Common myeloid progenitor, CD34-positive (primary cell): ENCODE measurements at regions of chr17 and their contacts with region 1.

Region 1: GRCh38 chr17:47663912-47664625 is 14.3 kb downstream of the KPNB1 start:
- DNase-seq: peak; percentile 69 to 81 (median 73)
- H3K4me3 ChIP-seq: no peak overlapping the region
- H3K27ac ChIP-seq: no peak overlapping the region
- H3K4me1 ChIP-seq: peaks cover 7 to 20% (median 12%) of the 10 kb centered on the region in 4 experiments
- H3K27me3 ChIP-seq: no peaks in the 10 kb centered on the region

Region 2: DNA sequence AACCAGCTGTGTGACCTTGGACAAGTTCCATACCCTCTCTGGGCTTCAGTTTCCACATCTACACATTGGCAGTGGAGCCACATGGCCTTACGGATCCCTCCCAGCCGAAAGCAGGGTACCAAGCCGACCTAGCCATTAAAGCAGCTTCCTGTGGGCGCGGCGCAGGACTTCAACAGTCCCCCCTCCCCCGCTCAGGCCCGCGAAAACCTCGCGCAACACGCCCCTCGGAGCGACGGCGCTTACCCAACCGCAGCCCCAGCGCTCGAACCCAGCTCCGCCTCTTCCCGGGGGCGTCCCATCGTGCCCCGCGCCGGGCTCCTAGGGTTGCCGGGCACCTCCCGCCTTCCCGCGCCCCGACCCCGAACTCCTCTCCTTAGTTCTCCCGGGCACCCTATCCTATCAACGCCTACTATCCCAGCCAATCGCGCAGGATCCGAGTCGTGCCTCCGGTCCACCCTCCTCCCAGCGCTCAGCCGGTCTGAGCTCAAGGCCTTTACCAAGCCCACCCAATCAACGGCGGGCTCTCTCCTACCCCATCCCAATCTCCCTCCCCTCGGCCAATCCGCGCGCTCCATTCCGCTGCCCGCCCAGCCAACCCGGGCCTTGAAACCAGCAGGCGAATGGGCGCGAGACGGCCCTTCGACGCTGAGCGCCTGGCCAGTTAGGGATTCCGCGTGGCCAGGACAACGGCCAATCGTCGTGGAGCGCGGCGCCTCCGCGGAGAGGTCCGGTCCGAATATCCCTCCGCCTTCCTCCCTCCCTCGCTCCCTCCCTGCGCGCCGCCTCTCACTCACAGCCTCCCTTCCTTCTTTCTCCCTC is 14.7 kb before region 1 on chr17 and contains the start of gene KPNB1:
- CTCF ChIA-PET with region 1: interaction called, 56 read pairs
- POLR2A ChIA-PET with region 1: no interaction called
- DNase-seq: peak; percentile 100
- H3K4me3 ChIP-seq: peak within 1 kb of the TSS; percentile 66 to 91 (median 81)
- H3K27ac ChIP-seq: peak within 1 kb of the TSS; percentile 61 to 79
- H3K4me1 ChIP-seq: peaks cover 21 to 44% (median 36%) of the 10 kb centered on the region in 4 experiments
- H3K27me3 ChIP-seq: no peaks in the 10 kb centered on the region

Region 3: GRCh38 chr17:47675380-47676198 is 11.5 kb after region 1 on chr17:
- CTCF ChIA-PET with region 1: interaction called, 44 read pairs
- POLR2A ChIA-PET with region 1: no interaction called
- DNase-seq: no peak
- H3K4me3 ChIP-seq: no peak overlapping the region
- H3K27ac ChIP-seq: no peak overlapping the region
- H3K4me1 ChIP-seq: peaks cover 0 to 1% (median 0%) of the 10 kb centered on the region in 4 experiments
- H3K27me3 ChIP-seq: no peaks in the 10 kb centered on the region

Region 4: DNA sequence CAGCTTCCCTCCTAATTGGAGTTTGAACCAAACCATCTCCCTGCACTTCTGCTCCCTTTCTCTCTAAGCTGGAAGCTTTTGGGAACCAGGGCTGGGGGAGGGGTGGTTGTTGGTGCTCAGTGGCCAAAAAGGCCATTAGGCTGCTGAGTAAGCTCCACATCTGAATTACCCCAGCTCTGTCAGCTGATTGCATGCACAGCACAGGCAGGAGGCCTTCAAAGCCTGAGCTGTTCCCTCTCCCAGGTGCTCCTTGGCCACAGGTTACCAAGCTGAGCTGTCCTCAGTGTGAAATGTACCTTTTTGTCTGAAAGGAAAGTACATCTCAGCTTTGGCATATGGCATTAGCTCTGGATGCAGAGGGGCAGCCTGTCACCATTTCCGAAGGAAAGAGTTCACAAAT is 23.7 kb after region 1 on chr17:
- CTCF ChIA-PET with region 1: interaction called, 17 read pairs
- POLR2A ChIA-PET with region 1: no interaction called
- DNase-seq: no peak
- H3K4me3 ChIP-seq: no peak overlapping the region
- H3K27ac ChIP-seq: no peak overlapping the region
- H3K4me1 ChIP-seq: peaks cover 2 to 16% (median 7%) of the 10 kb centered on the region in 4 experiments
- H3K27me3 ChIP-seq: no peaks in the 10 kb centered on the region

Region 5: DNA sequence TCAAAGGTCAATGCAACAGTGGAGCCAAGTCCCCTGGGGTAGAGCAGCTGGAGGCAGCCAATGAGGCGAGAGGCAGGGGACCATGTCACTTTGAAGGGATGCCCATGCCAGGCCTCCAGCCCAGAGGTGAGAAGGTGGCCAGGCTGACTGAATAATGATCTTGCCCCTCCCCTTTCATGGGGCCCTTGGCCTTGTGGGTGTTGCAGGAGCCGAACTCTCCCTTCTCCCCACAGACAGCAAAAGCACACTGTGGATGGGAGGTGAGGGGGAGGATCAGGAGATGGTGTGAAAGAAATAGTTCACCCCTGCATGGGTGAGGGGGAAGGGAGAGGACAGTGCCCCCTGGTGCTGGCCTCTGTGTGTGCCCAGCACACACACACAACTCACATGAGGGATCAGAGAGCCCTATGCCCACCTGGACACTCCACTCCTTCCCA is 53.2 kb after region 1 on chr17:
- CTCF ChIA-PET with region 1: interaction called, 16 read pairs
- POLR2A ChIA-PET with region 1: no interaction called
- DNase-seq: peak in 1 of 3 donors; percentile 41
- H3K4me3 ChIP-seq: no peak overlapping the region
- H3K27ac ChIP-seq: no peak overlapping the region
- H3K4me1 ChIP-seq: peaks cover 10 to 71% (median 62%) of the 10 kb centered on the region in 4 experiments
- H3K27me3 ChIP-seq: peaks cover 0 to 13% (median 0%) of the 10 kb centered on the region in 5 experiments

Region 6: DNA sequence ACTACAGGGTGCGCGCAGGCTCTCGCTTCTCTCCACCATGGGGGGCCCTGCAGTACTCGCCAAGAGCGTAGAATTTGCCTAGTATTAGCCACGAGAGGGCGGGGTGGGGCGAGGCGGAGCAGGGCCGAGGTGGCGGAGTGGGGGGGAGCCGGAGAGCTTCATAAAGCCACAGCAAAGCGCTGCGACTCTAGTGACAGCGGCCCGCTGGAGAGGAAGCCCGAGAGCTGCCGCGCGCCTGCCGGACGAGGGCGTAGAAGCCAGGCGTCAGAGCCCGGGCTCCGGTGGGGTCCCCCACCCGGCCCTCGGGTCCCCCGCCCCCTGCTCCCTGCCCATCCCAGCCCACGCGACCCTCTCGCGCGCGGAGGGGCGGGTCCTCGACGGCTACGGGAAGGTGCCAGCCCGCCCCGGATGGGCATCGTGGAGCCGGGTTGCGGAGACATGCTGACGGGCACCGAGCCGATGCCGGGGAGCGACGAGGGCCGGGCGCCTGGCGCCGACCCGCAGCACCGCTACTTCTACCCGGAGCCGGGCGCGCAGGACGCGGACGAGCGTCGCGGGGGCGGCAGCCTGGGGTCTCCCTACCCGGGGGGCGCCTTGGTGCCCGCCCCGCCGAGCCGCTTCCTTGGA is 69.1 kb after region 1 on chr17 and contains the start of gene TBX21:
- CTCF ChIA-PET with region 1: interaction called, 17 read pairs
- POLR2A ChIA-PET with region 1: no interaction called
- DNase-seq: peak; percentile 92 to 94 (median 94)
- H3K4me3 ChIP-seq: peak within 1 kb of the TSS; percentile 17 to 70 (median 51)
- H3K27ac ChIP-seq: no peak within 1 kb of the TSS
- H3K4me1 ChIP-seq: peaks cover 0 to 27% (median 25%) of the 10 kb centered on the region in 4 experiments
- H3K27me3 ChIP-seq: peaks cover 0 to 24% (median 12%) of the 10 kb centered on the region in 5 experiments

Region 7: DNA sequence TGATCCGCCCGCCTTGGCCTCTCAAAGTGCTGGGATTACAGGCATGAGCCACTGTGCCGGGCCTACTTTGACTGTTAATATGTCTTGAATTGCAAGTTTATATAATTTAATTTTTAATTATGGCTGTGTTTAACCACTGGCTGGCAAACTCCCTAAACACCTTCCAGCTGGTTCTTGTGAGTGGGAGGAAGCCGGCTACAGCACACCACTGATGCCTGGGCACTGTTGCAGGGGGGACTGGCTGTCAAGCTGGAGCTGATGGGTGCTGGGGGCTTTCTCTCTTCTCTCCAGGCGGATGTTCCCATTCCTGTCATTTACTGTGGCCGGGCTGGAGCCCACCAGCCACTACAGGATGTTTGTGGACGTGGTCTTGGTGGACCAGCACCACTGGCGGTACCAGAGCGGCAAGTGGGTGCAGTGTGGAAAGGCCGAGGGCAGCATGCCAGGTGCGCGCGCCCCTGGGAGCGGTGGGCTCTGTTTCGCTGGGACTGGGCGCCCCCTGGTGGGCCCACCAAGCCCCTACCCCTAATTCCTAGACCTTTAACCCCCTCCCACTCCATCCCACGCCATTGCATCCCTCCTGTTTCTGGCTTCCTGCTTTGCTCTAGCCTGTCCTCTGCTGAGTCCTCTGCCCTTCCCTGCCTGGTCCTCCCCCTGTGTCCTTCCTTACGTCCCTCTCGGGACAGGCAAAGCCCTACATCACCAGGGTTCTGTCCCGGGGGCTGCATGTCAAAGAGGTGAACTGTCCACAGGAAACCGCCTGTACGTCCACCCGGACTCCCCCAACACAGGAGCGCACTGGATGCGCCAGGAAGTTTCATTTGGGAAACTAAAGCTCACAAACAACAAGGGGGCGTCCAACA is 78.5 kb after region 1 on chr17:
- CTCF ChIA-PET with region 1: interaction called, 77 read pairs
- POLR2A ChIA-PET with region 1: no interaction called
- DNase-seq: peak; percentile 58 to 68 (median 59)
- H3K4me3 ChIP-seq: no peak overlapping the region
- H3K27ac ChIP-seq: no peak overlapping the region
- H3K4me1 ChIP-seq: peaks cover 6 to 22% (median 16%) of the 10 kb centered on the region in 4 experiments
- H3K27me3 ChIP-seq: peaks cover 0 to 4% (median 0%) of the 10 kb centered on the region in 5 experiments

Region 8: GRCh38 chr17:47762728-47763127 is 98.7 kb after region 1 on chr17:
- CTCF ChIA-PET with region 1: no interaction called
- POLR2A ChIA-PET with region 1: no interaction called
- DNase-seq: no peak
- H3K4me3 ChIP-seq: no peak overlapping the region
- H3K27ac ChIP-seq: no peak overlapping the region
- H3K4me1 ChIP-seq: no peaks in the 10 kb centered on the region
- H3K27me3 ChIP-seq: peaks cover 0 to 1% (median 0%) of the 10 kb centered on the region in 5 experiments